OCI-LY7 (cell line): ENCODE measurements at regions of chr5 and their contacts with region 1.

Region 1: DNA sequence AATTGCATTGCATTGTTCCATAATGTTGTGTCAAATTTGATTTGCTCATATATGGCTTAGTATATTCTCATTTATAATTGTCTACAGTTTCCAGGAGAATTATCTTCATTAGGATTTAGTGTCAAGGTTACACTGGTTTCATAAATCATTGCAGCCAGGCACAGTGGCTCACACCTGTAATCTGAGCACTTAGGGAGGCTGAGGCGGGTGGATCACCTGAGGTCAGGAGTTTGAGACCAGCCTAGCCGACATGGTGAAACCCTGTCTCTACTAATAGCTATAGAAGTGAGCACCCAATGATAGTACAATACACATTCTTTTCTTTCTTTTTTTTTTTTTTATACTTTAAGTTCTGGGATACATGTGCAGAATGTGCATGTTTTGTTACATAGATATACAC is 282.5 kb downstream of the KIAA0825 start:
- DNase-seq: no peak
- H3K4me3 ChIP-seq: no peak overlapping the region
- H3K27ac ChIP-seq: no peak overlapping the region
- H3K4me1 ChIP-seq: no peaks in the 10 kb centered on the region
- CTCF ChIP-seq: no peak

Region 2: GRCh38 chr5:94361161-94361560 is 25.2 kb after region 1 on chr5:
- CTCF ChIA-PET with region 1: no interaction called
- POLR2A ChIA-PET with region 1: no interaction called
- intact Hi-C with region 1: loop called (anchors 1 kb)
- DNase-seq: no peak
- H3K4me3 ChIP-seq: no peak overlapping the region
- H3K27ac ChIP-seq: no peak overlapping the region
- H3K4me1 ChIP-seq: no peaks in the 10 kb centered on the region
- CTCF ChIP-seq: no peak